ENCODE measurements at regions of chr7 and their contacts with region 1.

Region 1: GRCh38 chr7:64665980-64666662 is at the start of gene ZNF107:
- DNase-seq: peak; percentile 94
- H3K4me3 Mint-ChIP-seq: peak within 1 kb of the TSS; percentile 94
- H3K27ac Mint-ChIP-seq: peak within 1 kb of the TSS; percentile 83
- H3K4me1 Mint-ChIP-seq: peaks cover 12% of the 10 kb centered on the region
- H3K27me3 Mint-ChIP-seq: no peaks in the 10 kb centered on the region
- CTCF ChIP-seq: no peak
- total RNA-seq, gene ZNF107: 4.6 and 5.0 TPM in 2 replicates

Region 2: GRCh38 chr7:64653721-64654401 is 12.3 kb before region 1 on chr7:
- CTCF ChIA-PET with region 1: no interaction called
- POLR2A ChIA-PET with region 1: interaction called, 12 read pairs
- intact Hi-C with region 1: no loop called
- DNase-seq: no peak
- H3K4me3 Mint-ChIP-seq: no peak overlapping the region
- H3K27ac Mint-ChIP-seq: no peak overlapping the region
- H3K4me1 Mint-ChIP-seq: no peaks in the 10 kb centered on the region
- H3K27me3 Mint-ChIP-seq: no peaks in the 10 kb centered on the region
- CTCF ChIP-seq: no peak

Region 3: DNA sequence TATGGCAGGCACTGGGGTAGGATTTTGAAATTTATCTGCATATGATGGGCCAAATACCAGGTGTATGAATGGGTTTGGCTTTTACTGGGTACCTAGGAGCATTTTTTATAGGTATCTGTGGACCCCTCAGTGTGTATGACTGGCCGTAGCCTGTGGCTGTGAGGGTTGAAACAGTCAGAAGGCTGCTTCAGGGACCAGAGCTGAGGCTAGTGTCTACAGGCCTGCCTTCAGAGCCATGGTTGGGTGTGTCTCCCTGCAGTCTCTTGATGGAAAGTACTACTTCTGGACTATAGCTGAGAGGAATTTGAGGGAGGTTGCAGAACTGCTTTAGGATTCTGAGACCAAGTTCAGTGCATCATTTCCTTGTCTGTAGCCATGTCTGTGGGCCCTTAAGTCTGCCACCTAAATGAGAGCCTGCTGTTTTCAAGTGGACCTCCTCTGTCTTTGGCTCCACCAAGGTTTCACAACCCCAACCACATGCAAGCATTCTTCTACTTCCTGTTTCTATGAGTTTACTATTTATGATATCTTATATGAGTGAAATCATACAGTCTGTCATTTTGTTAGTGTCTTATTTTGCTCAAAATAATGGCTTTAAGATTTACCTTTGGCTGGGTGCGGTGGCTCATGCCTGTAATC is 108.2 kb after region 1 on chr7:
- CTCF ChIA-PET with region 1: no interaction called
- POLR2A ChIA-PET with region 1: no interaction called
- intact Hi-C with region 1: no loop called
- DNase-seq: no peak
- H3K4me3 Mint-ChIP-seq: no peak overlapping the region
- H3K27ac Mint-ChIP-seq: no peak overlapping the region
- H3K4me1 Mint-ChIP-seq: no peaks in the 10 kb centered on the region
- H3K27me3 Mint-ChIP-seq: no peaks in the 10 kb centered on the region
- CTCF ChIP-seq: no peak

Region 4: GRCh38 chr7:64794171-64794844 is 128.2 kb after region 1 on chr7 and contains the start of gene ZNF138:
- CTCF ChIA-PET with region 1: no interaction called
- POLR2A ChIA-PET with region 1: interaction called, 11 read pairs
- intact Hi-C with region 1: no loop called
- DNase-seq: peak; percentile 96
- H3K4me3 Mint-ChIP-seq: peak within 1 kb of the TSS; percentile 97
- H3K27ac Mint-ChIP-seq: peak within 1 kb of the TSS; percentile 96
- H3K4me1 Mint-ChIP-seq: peaks cover 14% of the 10 kb centered on the region
- H3K27me3 Mint-ChIP-seq: no peaks in the 10 kb centered on the region
- CTCF ChIP-seq: no peak
- total RNA-seq, gene ZNF138: 3.3 and 5.4 TPM in 2 replicates

Measured in MCF 10A (cell line).